ENCODE measurements at regions of chr22 and their contacts with region 1.

Region 1: GRCh38 chr22:32836280-32837123 is 35.0 kb downstream of the TIMP3 start:
- DNase-seq: no peak
- H3K4me3 ChIP-seq: no peak overlapping the region
- H3K27ac ChIP-seq: no peak overlapping the region
- H3K4me1 ChIP-seq: peaks cover 10 to 48% of the 10 kb centered on the region in 2 donors
- H3K27me3 ChIP-seq: no peaks in the 10 kb centered on the region
- CTCF ChIP-seq: peak; percentile 26 to 46 (median 43)

Region 2: GRCh38 chr22:32322986-32323385 is 513.5 kb before region 1 on chr22:
- intact Hi-C with region 1: no loop called
- DNase-seq: peak in 1 of 2 donors; percentile 52
- H3K4me3 ChIP-seq: no peak overlapping the region
- H3K27ac ChIP-seq: no peak overlapping the region
- H3K4me1 ChIP-seq: no peaks in the 10 kb centered on the region
- H3K27me3 ChIP-seq: no peaks in the 10 kb centered on the region
- CTCF ChIP-seq: no peak

Region 3: GRCh38 chr22:32803020-32803754 is 33.3 kb before region 1 on chr22:
- intact Hi-C with region 1: loop called (anchors 2 kb)
- DNase-seq: peak in 1 of 2 donors; percentile 76
- H3K4me3 ChIP-seq: peak overlapping the region; percentile 74 to 91
- H3K27ac ChIP-seq: peak overlapping the region; percentile 69 to 75
- H3K4me1 ChIP-seq: peaks cover 0 to 8% of the 10 kb centered on the region in 2 donors
- H3K27me3 ChIP-seq: no peaks in the 10 kb centered on the region
- CTCF ChIP-seq: no peak

Region 4: GRCh38 chr22:32850591-32851517 is 14.4 kb after region 1 on chr22:
- intact Hi-C with region 1: no loop called
- DNase-seq: peak; percentile 58 to 91
- H3K4me3 ChIP-seq: peak overlapping the region in 1 of 2 donors; percentile 12
- H3K27ac ChIP-seq: peak overlapping the region; percentile 75 to 77
- H3K4me1 ChIP-seq: peaks cover 26 to 46% of the 10 kb centered on the region in 2 donors
- H3K27me3 ChIP-seq: no peaks in the 10 kb centered on the region
- CTCF ChIP-seq: no peak

Region 5: GRCh38 chr22:33354928-33355327 is 518.4 kb after region 1 on chr22:
- intact Hi-C with region 1: no loop called
- DNase-seq: no peak
- H3K4me3 ChIP-seq: no peak overlapping the region
- H3K27ac ChIP-seq: no peak overlapping the region
- H3K4me1 ChIP-seq: no peaks in the 10 kb centered on the region
- H3K27me3 ChIP-seq: no peaks in the 10 kb centered on the region
- CTCF ChIP-seq: no peak